Calu3 (cell line): ENCODE measurements at regions of chr17 and their contacts with region 1.

Region 1: GRCh38 chr17:45135192-45135977 is at the start of gene ACBD4:
- DNase-seq: peak; percentile 99
- H3K4me3 Mint-ChIP-seq: peak within 1 kb of the TSS; percentile 90
- H3K27ac Mint-ChIP-seq: peak within 1 kb of the TSS; percentile 81
- H3K4me1 Mint-ChIP-seq: peaks cover 29% of the 10 kb centered on the region
- H3K27me3 Mint-ChIP-seq: no peaks in the 10 kb centered on the region
- CTCF ChIP-seq: peak; percentile 100
- total RNA-seq, gene ACBD4: 21.8 and 23.2 TPM in 2 replicates

Region 2: GRCh38 chr17:44775136-44775837 is 360.1 kb before region 1 on chr17:
- CTCF ChIA-PET with region 1: no interaction called
- intact Hi-C with region 1: loop called (anchors 10 kb)
- DNase-seq: no peak
- H3K4me3 Mint-ChIP-seq: peak overlapping the region; percentile 86
- H3K27ac Mint-ChIP-seq: peak overlapping the region; percentile 36
- H3K4me1 Mint-ChIP-seq: peaks cover 7% of the 10 kb centered on the region
- H3K27me3 Mint-ChIP-seq: peaks cover 51% of the 10 kb centered on the region
- CTCF ChIP-seq: no peak

Region 3: GRCh38 chr17:45098869-45099616 is 36.3 kb before region 1 on chr17:
- CTCF ChIA-PET with region 1: interaction called, 8 read pairs
- intact Hi-C with region 1: loop called (anchors 5 kb)
- DNase-seq: peak; percentile 95
- H3K4me3 Mint-ChIP-seq: no peak overlapping the region
- H3K27ac Mint-ChIP-seq: peak overlapping the region; percentile 8
- H3K4me1 Mint-ChIP-seq: peaks cover 6% of the 10 kb centered on the region
- H3K27me3 Mint-ChIP-seq: no peaks in the 10 kb centered on the region
- CTCF ChIP-seq: peak; percentile 98

Region 4: GRCh38 chr17:45161019-45161825 is 25.8 kb after region 1 on chr17:
- CTCF ChIA-PET with region 1: interaction called, 31 read pairs
- intact Hi-C with region 1: no loop called
- DNase-seq: peak; percentile 100
- H3K4me3 Mint-ChIP-seq: peak overlapping the region; percentile 91
- H3K27ac Mint-ChIP-seq: peak overlapping the region; percentile 97
- H3K4me1 Mint-ChIP-seq: peaks cover 46% of the 10 kb centered on the region
- H3K27me3 Mint-ChIP-seq: no peaks in the 10 kb centered on the region
- CTCF ChIP-seq: no peak

Region 5: DNA sequence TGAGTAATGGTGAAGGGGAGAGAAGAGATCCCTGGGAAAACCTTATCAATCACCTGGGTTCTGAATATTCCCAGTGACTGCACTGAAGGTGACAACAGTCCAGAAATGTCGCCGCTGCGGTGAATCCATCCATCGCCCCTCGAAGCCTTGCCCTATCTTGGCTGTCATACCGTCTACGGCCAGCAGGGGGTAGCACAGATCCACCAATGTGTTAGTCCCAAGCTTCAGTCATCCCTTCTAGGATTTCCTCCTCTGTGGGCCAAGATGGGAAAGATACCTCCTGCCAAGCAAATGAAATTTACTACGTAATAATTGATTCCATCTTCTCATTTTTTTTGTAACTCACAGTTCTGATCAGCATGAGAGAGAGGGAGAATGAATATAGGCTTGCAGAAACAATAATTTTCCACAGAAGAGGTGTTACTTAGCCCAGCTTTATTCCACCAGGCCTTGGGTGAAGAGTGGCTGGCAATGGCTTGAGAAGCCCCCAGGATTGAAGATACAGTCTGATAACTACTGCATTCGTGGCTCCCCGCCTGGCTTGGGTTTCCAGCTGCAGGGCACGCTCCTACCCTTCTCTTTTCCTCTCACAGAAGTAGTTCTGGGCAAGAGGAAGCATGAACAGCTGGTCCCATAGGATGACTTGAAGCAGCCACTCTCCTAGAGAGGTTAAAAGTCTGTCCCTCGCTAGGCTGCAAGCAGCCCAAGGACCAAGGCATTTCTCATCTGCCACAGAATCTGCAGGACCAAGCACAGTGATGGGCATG is 83.7 kb after region 1 on chr17:
- CTCF ChIA-PET with region 1: interaction called, 32 read pairs
- intact Hi-C with region 1: no loop called
- DNase-seq: peak; percentile 95
- H3K4me3 Mint-ChIP-seq: no peak overlapping the region
- H3K27ac Mint-ChIP-seq: no peak overlapping the region
- H3K4me1 Mint-ChIP-seq: no peaks in the 10 kb centered on the region
- H3K27me3 Mint-ChIP-seq: peaks cover 43% of the 10 kb centered on the region
- CTCF ChIP-seq: peak; percentile 98

Region 6: GRCh38 chr17:45277216-45277849 is 141.9 kb after region 1 on chr17:
- CTCF ChIA-PET with region 1: interaction called, 17 read pairs
- intact Hi-C with region 1: no loop called
- DNase-seq: peak; percentile 95
- H3K4me3 Mint-ChIP-seq: no peak overlapping the region
- H3K27ac Mint-ChIP-seq: no peak overlapping the region
- H3K4me1 Mint-ChIP-seq: peaks cover 13% of the 10 kb centered on the region
- H3K27me3 Mint-ChIP-seq: no peaks in the 10 kb centered on the region
- CTCF ChIP-seq: peak; percentile 84